ENCODE measurements at regions of chr17 and their contacts with region 1.

Region 1: DNA sequence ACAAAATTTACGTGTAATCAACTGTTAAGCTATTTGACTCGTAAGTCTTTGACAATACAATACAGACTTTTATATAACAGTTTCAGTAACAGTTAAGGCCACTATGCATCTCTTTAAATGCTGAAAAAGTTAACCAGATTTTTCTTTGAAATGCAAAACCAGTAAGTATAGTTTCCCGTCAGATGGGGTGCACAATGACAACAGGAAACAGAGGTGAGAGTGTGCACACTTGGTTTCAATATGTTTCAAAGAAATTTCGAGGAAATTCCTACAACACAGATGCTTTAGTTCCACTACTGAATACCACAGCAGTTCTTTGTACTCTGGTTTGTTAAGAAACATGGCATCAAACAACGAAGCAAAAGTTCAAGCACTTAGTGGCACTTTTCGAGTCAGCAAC is 48.4 kb downstream of the RNF157 start:
- DNase-seq: peak; percentile 63
- ATAC-seq: peak; percentile 79
- H3K4me3 Mint-ChIP-seq: peak overlapping the region; percentile 61
- H3K27ac Mint-ChIP-seq: peak overlapping the region; percentile 96
- H3K4me1 Mint-ChIP-seq: peaks cover 80% of the 10 kb centered on the region
- H3K27me3 Mint-ChIP-seq: no peaks in the 10 kb centered on the region

Region 2: DNA sequence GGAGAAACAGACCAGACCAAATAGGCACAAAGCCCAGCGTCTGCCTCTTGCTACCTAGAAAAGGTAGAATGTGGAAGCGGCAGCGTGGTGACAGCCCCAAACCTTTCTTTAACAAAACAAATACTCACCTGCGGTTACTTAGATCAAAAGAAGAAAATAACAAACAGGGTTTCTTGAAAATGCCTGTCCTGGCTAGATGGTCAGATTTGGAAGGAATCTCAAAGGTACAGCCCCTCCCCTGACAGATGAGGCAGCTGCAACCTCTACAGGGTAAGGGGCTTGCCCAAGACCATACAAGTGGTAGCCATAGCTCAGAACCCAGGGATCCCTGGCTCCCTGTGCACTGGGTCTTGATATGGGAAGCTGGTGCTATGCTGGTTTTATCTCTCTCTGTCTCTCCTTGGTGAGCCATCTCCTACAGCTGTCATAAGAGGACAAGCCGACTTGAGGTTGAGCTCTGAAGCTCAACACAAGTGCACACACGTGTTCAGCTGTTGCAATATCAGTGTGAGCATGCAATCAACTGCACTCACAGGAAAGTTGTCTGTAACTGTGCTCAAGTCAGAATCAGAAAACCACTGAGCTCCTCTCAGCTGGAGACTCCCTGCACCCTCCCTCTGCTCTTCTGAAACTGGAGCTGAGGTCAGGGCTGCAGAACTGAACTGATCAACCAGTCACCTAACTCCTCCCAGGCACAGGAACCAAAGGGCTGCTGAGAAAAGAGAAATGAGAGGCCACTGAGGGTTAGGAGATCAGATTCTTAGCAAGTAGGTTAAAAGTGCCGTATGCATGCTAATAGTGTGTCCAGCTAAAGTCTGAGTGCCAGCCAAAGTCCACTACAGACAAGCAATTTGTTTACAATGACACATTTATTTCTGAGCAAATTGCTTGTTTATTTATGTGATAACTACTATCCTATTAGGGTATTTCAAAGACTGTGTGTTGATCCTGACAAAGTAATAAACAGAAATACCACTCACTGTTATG is 54.5 kb after region 1 on chr17:
- CTCF ChIA-PET with region 1: interaction called, 9 read pairs
- POLR2A ChIA-PET with region 1: interaction called, 17 read pairs
- intact Hi-C with region 1: loop called (anchors 1 kb)
- DNase-seq: peak; percentile 84
- ATAC-seq: peak; percentile 98
- H3K4me3 Mint-ChIP-seq: peak overlapping the region; percentile 53
- H3K27ac Mint-ChIP-seq: peak overlapping the region; percentile 89
- H3K4me1 Mint-ChIP-seq: peaks cover 59% of the 10 kb centered on the region
- H3K27me3 Mint-ChIP-seq: peaks cover 2% of the 10 kb centered on the region

Measured in activated CD4-positive, alpha-beta T cell treated with anti-CD3 and anti-CD28 coated beads for 36 hours (primary cell).